GM10248 (cell line): ENCODE measurements at regions of chr5 and their contacts with region 1.

Region 1: GRCh38 chr5:141475625-141476131 is at the start of gene PCDHGC3:
- DNase-seq: peak; percentile 89
- CTCF ChIP-seq: peak; percentile 75

Region 2: DNA sequence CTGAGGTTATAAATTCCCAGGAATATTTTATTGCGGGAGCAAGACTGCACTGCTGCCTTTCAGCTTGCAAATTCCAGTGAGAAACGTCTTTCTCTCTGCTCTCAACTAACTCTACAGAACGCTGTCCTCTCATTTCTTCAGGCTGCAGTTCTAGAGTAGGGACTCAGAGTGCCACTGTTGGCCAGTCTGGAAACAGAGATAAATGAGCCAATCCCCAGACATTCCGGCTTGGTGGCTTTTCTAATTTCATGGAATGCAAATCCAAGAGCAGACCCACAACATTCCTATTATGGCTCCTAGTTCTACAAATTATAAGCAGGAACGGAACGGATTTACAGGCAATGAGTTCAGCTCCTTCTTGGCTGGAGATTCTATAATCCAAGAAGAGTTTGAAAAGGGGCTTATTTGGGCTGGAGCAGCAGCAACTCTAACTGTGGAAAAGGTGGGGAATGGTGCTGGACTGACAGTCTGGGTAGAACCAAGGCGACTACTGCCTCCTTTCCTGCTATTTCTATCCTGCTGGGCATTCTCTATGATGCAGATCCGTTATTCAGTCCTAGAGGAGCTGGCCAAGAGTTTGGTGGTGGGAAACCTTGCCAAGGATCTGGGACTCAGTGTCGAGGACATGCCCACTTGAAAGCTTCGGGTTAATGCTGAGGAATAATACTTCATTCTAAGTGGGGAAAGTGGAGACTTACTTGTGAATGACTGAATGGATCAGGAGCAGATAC is 36.1 kb before region 1 on chr5:
- CTCF ChIA-PET with region 1: no interaction called
- POLR2A ChIA-PET with region 1: no interaction called
- DNase-seq: no peak
- CTCF ChIP-seq: no peak

Region 3: DNA sequence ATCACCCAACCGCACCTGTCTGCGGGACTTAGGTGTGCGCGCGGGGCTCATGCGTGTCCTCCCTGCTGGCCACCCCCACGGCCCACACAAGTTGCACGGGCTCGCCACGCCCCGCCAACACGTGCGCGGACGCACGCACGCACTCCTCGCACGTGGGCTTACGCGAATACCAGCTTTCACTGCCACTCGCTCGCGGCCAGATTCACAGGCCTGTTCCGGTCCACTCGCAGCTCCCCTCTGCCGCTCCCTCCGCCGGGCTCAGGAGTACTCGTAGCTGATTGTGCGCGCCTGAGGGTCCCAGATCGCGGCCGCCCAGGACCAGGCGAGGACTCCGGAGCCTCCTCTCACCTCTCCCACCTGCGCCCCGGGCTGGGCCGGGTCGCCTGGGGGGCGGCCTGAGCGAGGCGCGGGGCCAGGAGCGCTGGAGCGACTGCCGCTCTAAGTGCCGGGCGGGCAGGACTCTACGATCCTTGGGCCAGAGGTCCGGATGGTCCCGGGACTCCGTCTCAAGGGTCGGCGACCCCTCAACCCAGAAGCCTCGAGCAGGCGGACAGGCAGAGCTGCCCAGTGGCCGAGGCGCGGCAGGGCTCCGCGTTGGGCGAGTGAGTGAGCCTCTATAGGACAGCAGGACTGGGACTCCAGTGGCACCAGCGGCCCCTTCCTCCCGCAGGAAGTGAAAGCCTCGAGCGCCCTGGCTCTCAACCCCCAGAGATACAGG is 16.6 kb after region 1 on chr5:
- CTCF ChIA-PET with region 1: interaction called, 15 read pairs
- POLR2A ChIA-PET with region 1: no interaction called
- DNase-seq: peak; percentile 63
- CTCF ChIP-seq: no peak

Region 4: DNA sequence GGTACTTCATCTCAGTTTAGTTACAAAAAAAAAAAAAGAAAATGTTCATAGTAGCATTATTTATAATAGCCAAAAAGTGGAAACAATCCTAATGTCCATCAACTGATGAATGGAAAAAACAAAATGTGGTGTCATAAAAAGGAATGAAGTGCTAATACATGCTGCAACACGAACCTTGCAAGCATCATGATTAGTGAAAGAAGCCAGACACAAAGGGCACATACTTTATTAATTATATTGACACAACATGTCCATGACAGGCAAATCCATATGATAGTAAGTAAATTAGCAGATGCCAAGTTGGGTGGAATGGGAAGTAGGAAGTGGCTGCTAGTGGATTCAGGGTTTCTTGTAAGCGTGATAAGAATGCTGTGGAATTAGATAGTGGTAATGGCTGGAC is 67.4 kb after region 1 on chr5:
- CTCF ChIA-PET with region 1: no interaction called
- POLR2A ChIA-PET with region 1: no interaction called
- DNase-seq: no peak
- CTCF ChIP-seq: no peak

Region 5: DNA sequence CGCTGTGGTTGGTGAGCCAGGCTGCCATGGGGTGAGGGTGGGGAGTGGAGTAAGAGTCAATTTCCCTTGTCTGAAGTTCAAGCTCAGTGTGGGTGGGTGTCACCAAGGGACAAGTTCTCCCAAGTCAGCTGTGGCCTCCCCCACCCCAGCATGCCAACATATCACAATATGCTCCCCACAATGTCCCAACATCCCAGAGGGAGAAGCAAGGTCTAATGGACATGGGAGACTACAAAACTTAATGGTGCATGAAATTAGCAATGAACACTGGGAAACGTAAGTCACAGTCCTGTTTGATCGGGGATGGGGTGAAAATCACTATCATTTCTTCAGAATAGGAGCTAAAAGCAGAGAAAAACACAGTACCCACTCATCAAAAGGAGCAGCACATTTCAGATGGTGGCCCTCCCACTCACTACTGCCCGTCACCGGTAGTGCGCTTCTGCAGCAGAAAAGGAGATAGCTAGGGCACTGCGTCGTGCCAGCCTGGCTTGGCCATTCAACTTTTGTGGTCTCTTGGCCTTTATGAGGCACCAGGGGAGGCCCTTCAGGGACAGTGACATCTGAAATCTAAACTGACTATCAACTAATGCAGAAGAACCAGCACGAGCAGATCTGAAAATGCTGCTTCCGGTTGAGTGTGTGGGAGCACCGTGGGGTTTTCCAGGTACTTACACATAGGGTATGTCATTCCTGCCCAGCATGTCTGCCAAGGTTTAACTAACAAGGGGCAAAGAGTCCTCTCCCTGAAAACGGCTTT is 612.4 kb after region 1 on chr5:
- CTCF ChIA-PET with region 1: no interaction called
- POLR2A ChIA-PET with region 1: no interaction called
- DNase-seq: no peak
- CTCF ChIP-seq: no peak